Mammary epithelial cell (primary cell): ENCODE measurements at regions of chr9 and their contacts with region 1.

Region 1: GRCh38 chr9:30758726-30759446 is 1625.6 kb upstream of the ACO1 start:
- DNase-seq: no peak
- H3K4me3 ChIP-seq: no peak overlapping the region
- H3K27ac ChIP-seq: no peak overlapping the region
- H3K4me1 ChIP-seq: no peaks in the 10 kb centered on the region
- H3K27me3 ChIP-seq: no peaks in the 10 kb centered on the region
- CTCF ChIP-seq: no peak

Region 2: GRCh38 chr9:31032206-31032605 is 273.3 kb after region 1 on chr9:
- CTCF ChIA-PET with region 1: interaction called, 13 read pairs
- dilution Hi-C with region 1: no loop called
- in situ Hi-C with region 1: no loop called
- intact Hi-C with region 1: no loop called
- DNase-seq: no peak
- H3K4me3 ChIP-seq: no peak overlapping the region
- H3K27ac ChIP-seq: no peak overlapping the region
- H3K4me1 ChIP-seq: peaks cover 4% of the 10 kb centered on the region
- H3K27me3 ChIP-seq: no peaks in the 10 kb centered on the region
- CTCF ChIP-seq: no peak

Region 3: DNA sequence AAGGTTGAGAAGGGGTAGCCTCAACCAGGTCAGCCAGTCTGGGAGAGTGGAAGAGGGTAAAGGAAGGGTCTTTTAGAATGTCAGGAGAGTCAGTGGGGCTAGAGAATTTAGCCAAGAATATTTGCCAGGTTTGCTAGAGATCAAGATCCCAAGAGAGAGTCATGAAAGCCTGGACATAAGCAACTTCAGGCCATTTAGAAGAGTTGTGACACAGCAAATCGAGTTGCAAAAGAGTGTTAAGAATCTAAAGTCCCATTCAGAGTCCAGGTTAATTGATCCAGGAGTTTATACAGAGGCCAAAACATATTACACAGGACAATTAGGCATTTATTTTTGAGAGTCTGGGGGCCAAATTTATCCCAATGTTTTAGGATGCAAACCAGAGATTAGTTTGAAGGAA is 365.5 kb after region 1 on chr9:
- CTCF ChIA-PET with region 1: no interaction called
- dilution Hi-C with region 1: no loop called
- in situ Hi-C with region 1: no loop called
- intact Hi-C with region 1: no loop called
- DNase-seq: no peak
- H3K4me3 ChIP-seq: no peak overlapping the region
- H3K27ac ChIP-seq: no peak overlapping the region
- H3K4me1 ChIP-seq: no peaks in the 10 kb centered on the region
- H3K27me3 ChIP-seq: no peaks in the 10 kb centered on the region
- CTCF ChIP-seq: no peak

Region 4: GRCh38 chr9:32300373-32300772 is 1541.5 kb after region 1 on chr9:
- CTCF ChIA-PET with region 1: no interaction called
- dilution Hi-C with region 1: no loop called
- in situ Hi-C with region 1: no loop called
- intact Hi-C with region 1: loop called (anchors 5 kb)
- DNase-seq: no peak
- H3K4me3 ChIP-seq: no peak overlapping the region
- H3K27ac ChIP-seq: no peak overlapping the region
- H3K4me1 ChIP-seq: no peaks in the 10 kb centered on the region
- H3K27me3 ChIP-seq: peaks cover 3% of the 10 kb centered on the region
- CTCF ChIP-seq: no peak